MCF 10A (cell line): ENCODE measurements at regions of chr20 and their contacts with region 1.

Region 1: DNA sequence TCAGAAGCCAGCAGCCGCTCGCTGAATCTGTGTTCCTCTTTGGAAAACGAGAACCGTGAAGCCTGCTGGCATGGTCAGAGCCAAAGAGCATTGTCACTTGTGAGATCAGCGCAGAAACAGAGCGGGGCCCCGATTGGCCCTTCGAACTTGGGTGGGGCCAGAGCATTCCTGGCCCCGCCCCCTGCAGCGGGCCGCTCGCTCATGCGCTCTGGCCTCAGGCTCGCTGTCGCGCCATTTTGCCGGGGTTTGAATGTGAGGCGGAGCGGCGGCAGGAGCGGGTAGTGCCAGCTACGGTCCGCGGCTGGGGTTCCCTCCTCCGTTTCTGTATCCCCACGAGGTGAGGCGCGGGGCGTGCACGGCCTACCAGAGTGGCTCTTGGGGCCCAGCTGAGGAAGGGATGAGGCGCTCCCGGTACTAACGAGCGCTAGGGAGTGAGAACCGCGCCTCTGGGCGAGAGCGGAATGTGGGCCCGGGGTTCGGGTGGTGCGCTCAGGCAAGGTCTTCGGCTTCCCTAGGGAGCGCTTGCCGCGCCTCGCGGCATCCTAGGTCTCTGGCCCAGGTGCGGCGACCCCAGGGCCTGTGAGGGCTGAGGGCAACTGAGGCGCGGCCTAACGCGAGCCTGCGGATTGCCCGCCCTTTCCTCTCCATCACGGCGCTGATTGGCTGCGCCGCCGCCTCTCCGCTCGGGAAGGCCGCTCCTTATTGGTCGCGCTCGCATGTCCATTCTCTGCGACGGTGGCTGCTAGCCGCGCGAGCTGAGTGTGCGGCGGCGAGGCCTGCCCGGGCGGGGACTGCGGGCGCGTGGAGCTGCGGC is at the start of gene CSE1L:
- DNase-seq: peak; percentile 94
- H3K4me3 Mint-ChIP-seq: peak within 1 kb of the TSS; percentile 95
- H3K27ac Mint-ChIP-seq: peak within 1 kb of the TSS; percentile 97
- H3K4me1 Mint-ChIP-seq: peaks cover 24% of the 10 kb centered on the region
- H3K27me3 Mint-ChIP-seq: no peaks in the 10 kb centered on the region
- CTCF ChIP-seq: no peak
- total RNA-seq, gene CSE1L: 65.2 and 101 TPM in 2 replicates

Region 2: GRCh38 chr20:48776306-48776705 is 270.0 kb before region 1 on chr20:
- CTCF ChIA-PET with region 1: no interaction called
- POLR2A ChIA-PET with region 1: no interaction called
- intact Hi-C with region 1: no loop called
- DNase-seq: no peak
- H3K4me3 Mint-ChIP-seq: no peak overlapping the region
- H3K27ac Mint-ChIP-seq: no peak overlapping the region
- H3K4me1 Mint-ChIP-seq: no peaks in the 10 kb centered on the region
- H3K27me3 Mint-ChIP-seq: peaks cover 42% of the 10 kb centered on the region
- CTCF ChIP-seq: no peak

Region 3: GRCh38 chr20:49028684-49029083 is 17.6 kb before region 1 on chr20:
- CTCF ChIA-PET with region 1: interaction called, 3 read pairs
- POLR2A ChIA-PET with region 1: interaction called, 20 read pairs
- intact Hi-C with region 1: no loop called
- DNase-seq: peak; percentile 20
- H3K4me3 Mint-ChIP-seq: no peak overlapping the region
- H3K27ac Mint-ChIP-seq: no peak overlapping the region
- H3K4me1 Mint-ChIP-seq: no peaks in the 10 kb centered on the region
- H3K27me3 Mint-ChIP-seq: no peaks in the 10 kb centered on the region
- CTCF ChIP-seq: peak; percentile 13